Vagina (tissue), 2 donors: ENCODE measurements at regions of chr12 and their contacts with region 1.

Region 1: DNA sequence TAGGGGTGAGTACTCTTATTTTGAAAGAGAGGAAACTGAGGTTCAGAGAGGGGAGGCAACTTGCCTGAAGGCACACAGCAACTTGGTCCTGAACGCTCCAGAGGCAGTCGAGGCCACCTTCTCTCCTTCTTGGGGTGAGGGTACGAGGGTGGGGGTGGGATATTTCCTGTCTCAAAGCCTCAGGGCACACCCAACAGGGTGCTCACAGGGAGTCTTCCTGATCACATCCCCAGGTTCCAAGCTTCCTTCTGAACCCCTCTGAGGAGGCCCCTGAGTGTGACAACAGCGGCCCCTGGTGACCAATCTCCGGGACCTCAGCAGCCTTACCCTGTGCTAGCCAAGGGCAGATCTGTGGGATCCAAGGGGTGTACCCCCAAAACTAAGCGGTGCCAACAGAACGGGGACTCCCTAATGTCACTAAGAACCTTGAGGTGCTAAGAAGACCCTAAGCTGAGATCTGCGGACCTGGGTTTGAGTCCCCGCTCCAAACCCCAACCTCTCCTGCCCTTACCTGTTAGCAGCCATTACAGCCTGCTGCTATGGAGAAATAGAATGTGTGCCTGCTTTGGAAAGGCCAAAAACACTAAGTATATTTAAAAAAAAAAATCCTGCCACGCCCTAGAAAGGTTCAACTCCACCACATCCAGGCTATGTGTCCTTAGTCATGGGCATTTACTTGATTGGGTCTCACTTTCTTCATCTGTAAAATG is 57.9 kb downstream of the TRPV4 start:
- DNase-seq: no peak
- H3K4me3 ChIP-seq: no peak overlapping the region
- H3K27ac ChIP-seq: no peak overlapping the region
- H3K4me1 ChIP-seq: no peaks in the 10 kb centered on the region
- H3K27me3 ChIP-seq: no peaks in the 10 kb centered on the region
- CTCF ChIP-seq: peak; percentile 52 to 84 (median 75)
- POLR2A ChIP-seq: no peak

Region 2: GRCh38 chr12:109523071-109523470 is 252.3 kb before region 1 on chr12:
- intact Hi-C with region 1: loop called (anchors 10 kb)
- DNase-seq: no peak
- H3K4me3 ChIP-seq: no peak overlapping the region
- H3K27ac ChIP-seq: no peak overlapping the region
- H3K4me1 ChIP-seq: no peaks in the 10 kb centered on the region
- H3K27me3 ChIP-seq: no peaks in the 10 kb centered on the region
- CTCF ChIP-seq: no peak
- POLR2A ChIP-seq: no peak

Region 3: GRCh38 chr12:109597795-109598427 is 177.4 kb before region 1 on chr12:
- intact Hi-C with region 1: loop called (anchors 5 kb)
- DNase-seq: no peak
- H3K4me3 ChIP-seq: no peak overlapping the region
- H3K27ac ChIP-seq: no peak overlapping the region
- H3K4me1 ChIP-seq: peaks cover 9% of the 10 kb centered on the region
- H3K27me3 ChIP-seq: no peaks in the 10 kb centered on the region
- CTCF ChIP-seq: peak; percentile 92 to 97 (median 93)
- POLR2A ChIP-seq: no peak